ENCODE measurements at regions of chr17 and their contacts with region 1.

Region 1: GRCh38 chr17:29931231-29931932 is 1.4 kb upstream of the SSH2 start:
- DNase-seq: peak; percentile 78
- H3K4me3 Mint-ChIP-seq: no peak overlapping the region
- H3K27ac Mint-ChIP-seq: no peak overlapping the region
- H3K4me1 Mint-ChIP-seq: peaks cover 16% of the 10 kb centered on the region
- H3K27me3 Mint-ChIP-seq: no peaks in the 10 kb centered on the region

Region 2: GRCh38 chr17:29579866-29580771 is 351.3 kb before region 1 on chr17:
- CTCF ChIA-PET with region 1: interaction called, 6 read pairs
- intact Hi-C with region 1: loop called (anchors 1 kb)
- DNase-seq: peak; percentile 96
- H3K4me3 Mint-ChIP-seq: no peak overlapping the region
- H3K27ac Mint-ChIP-seq: peak overlapping the region; percentile 77
- H3K4me1 Mint-ChIP-seq: peaks cover 24% of the 10 kb centered on the region
- H3K27me3 Mint-ChIP-seq: no peaks in the 10 kb centered on the region

Region 3: DNA sequence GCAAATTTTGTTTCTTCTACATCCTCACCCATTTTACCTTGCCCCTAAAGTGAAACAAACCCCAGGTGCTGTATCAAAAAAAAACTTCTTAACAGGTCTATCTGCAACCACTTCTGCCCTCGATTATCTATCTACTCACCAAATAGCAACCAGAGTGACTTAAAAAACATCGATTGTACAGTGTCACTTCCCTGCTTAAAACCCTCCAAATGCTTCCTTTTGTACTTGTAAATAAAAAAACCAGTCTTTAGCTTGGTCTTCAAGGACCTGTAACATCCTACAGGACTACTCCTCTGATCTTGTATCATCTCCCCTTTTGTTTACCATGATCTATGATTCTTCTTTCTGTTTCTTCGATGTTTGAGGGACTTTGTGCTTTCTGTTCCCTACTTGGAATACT is 226.0 kb before region 1 on chr17:
- CTCF ChIA-PET with region 1: no interaction called
- intact Hi-C with region 1: loop called (anchors 1 kb)
- DNase-seq: no peak
- H3K4me3 Mint-ChIP-seq: peak overlapping the region; percentile 55
- H3K27ac Mint-ChIP-seq: peak overlapping the region; percentile 96
- H3K4me1 Mint-ChIP-seq: peaks cover 46% of the 10 kb centered on the region
- H3K27me3 Mint-ChIP-seq: no peaks in the 10 kb centered on the region

Region 4: GRCh38 chr17:29807520-29808351 is 123.6 kb before region 1 on chr17:
- CTCF ChIA-PET with region 1: interaction called, 213 read pairs
- intact Hi-C with region 1: loop called (anchors 1 kb)
- DNase-seq: peak; percentile 87
- H3K4me3 Mint-ChIP-seq: no peak overlapping the region
- H3K27ac Mint-ChIP-seq: no peak overlapping the region
- H3K4me1 Mint-ChIP-seq: peaks cover 14% of the 10 kb centered on the region
- H3K27me3 Mint-ChIP-seq: no peaks in the 10 kb centered on the region

Region 5: GRCh38 chr17:29867643-29868181 is 63.7 kb before region 1 on chr17:
- CTCF ChIA-PET with region 1: interaction called, 62 read pairs
- intact Hi-C with region 1: loop called (anchors 1 kb)
- DNase-seq: no peak
- H3K4me3 Mint-ChIP-seq: no peak overlapping the region
- H3K27ac Mint-ChIP-seq: no peak overlapping the region
- H3K4me1 Mint-ChIP-seq: peaks cover 6% of the 10 kb centered on the region
- H3K27me3 Mint-ChIP-seq: no peaks in the 10 kb centered on the region

Region 6: DNA sequence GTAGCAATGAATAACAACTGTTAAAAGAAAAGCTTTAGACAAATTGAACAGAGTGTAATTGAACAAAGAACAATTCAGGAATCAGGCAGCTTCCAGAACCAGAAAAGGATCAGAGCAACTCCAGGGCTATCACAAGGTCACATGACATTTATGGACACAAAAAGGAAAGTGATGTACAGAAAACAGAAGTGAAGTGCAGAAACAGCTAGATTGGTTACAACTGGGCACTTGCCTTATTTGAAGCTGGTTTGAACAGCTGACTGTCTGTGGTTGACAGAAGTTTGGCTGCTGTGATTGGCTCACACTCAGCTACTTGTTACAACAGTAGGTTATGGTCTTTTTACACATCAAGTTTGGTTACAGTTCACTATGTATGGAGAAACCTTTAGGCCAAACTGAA is 24.8 kb after region 1 on chr17:
- CTCF ChIA-PET with region 1: interaction called, 13 read pairs
- intact Hi-C with region 1: no loop called
- DNase-seq: no peak
- H3K4me3 Mint-ChIP-seq: no peak overlapping the region
- H3K27ac Mint-ChIP-seq: no peak overlapping the region
- H3K4me1 Mint-ChIP-seq: no peaks in the 10 kb centered on the region
- H3K27me3 Mint-ChIP-seq: no peaks in the 10 kb centered on the region

Region 7: GRCh38 chr17:30021708-30022317 is 90.4 kb after region 1 on chr17:
- CTCF ChIA-PET with region 1: interaction called, 12 read pairs
- intact Hi-C with region 1: loop called (anchors 5 kb)
- DNase-seq: peak; percentile 63
- H3K4me3 Mint-ChIP-seq: no peak overlapping the region
- H3K27ac Mint-ChIP-seq: no peak overlapping the region
- H3K4me1 Mint-ChIP-seq: no peaks in the 10 kb centered on the region
- H3K27me3 Mint-ChIP-seq: no peaks in the 10 kb centered on the region